IMR-90 (cell line): ENCODE measurements at regions of chr14 and their contacts with region 1.

Region 1: GRCh38 chr14:75176142-75176820 is at the start of gene TMED10:
- DNase-seq: peak; percentile 85
- ATAC-seq: peak; percentile 85
- H3K4me3 ChIP-seq: peak within 1 kb of the TSS; percentile 75
- H3K27ac ChIP-seq: peak within 1 kb of the TSS; percentile 94
- H3K4me1 ChIP-seq: no peaks in the 10 kb centered on the region
- H3K27me3 ChIP-seq: no peaks in the 10 kb centered on the region
- CTCF ChIP-seq: no peak
- POLR2A ChIP-seq: peak; percentile 82; the same call in 1 of the 2 replicates
- RAD21 ChIP-seq: no peak
- total RNA-seq, gene TMED10: 327 and 441 TPM in 2 replicates

Region 2: DNA sequence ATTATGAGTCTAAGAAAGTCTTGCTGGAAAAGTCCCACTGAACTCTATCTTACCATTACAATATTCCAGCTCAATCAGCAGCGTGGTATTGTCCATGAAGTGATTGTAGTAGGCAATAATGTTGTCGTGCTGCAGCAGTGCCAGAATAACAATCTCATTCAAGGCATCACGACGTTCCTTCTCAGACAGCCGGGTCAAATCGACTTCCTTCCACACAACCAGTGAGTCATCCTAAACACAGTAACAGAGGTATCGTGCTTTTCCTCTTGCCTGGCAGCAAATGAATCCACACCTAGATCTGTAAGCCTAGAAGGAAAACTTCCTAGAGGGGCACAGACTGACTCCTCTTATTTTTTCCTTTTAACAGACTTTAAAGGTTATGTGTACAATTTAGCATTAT is 52.3 kb before region 1 on chr14:
- CTCF ChIA-PET with region 1: no interaction called
- POLR2A ChIA-PET with region 1: no interaction called
- dilution Hi-C with region 1: no loop called
- in situ Hi-C with region 1: no loop called
- intact Hi-C with region 1: no loop called
- DNase-seq: peak; percentile 86
- ATAC-seq: 0 out of 2 replicates have a peak, but pooled peaks have one; percentile 4
- H3K4me3 ChIP-seq: no peak overlapping the region
- H3K27ac ChIP-seq: no peak overlapping the region
- H3K4me1 ChIP-seq: peaks cover 6% of the 10 kb centered on the region; the same call in 1 of the 2 replicates
- H3K27me3 ChIP-seq: no peaks in the 10 kb centered on the region
- CTCF ChIP-seq: no peak
- POLR2A ChIP-seq: no peak
- RAD21 ChIP-seq: no peak

Region 3: GRCh38 chr14:75258615-75259466 is 82.6 kb after region 1 on chr14:
- CTCF ChIA-PET with region 1: interaction called, 4 read pairs
- POLR2A ChIA-PET with region 1: no interaction called
- dilution Hi-C with region 1: no loop called
- in situ Hi-C with region 1: no loop called
- intact Hi-C with region 1: loop called (anchors 1 kb)
- DNase-seq: peak; percentile 100
- ATAC-seq: peak; percentile 99
- H3K4me3 ChIP-seq: peak overlapping the region; percentile 53
- H3K27ac ChIP-seq: peak overlapping the region; percentile 82
- H3K4me1 ChIP-seq: peaks cover 8% of the 10 kb centered on the region
- H3K27me3 ChIP-seq: no peaks in the 10 kb centered on the region
- CTCF ChIP-seq: no peak
- POLR2A ChIP-seq: peak; percentile 71; the same call in 1 of the 2 replicates
- RAD21 ChIP-seq: no peak